H1 (cell line): ENCODE measurements at regions of chr7 and their contacts with region 1.

Region 1: GRCh38 chr7:124784879-124785818 is 19.6 kb upstream of the GPR37 start:
- DNase-seq: peak in 1 of 2 experiments; percentile 39
- H3K4me3 ChIP-seq: no peak overlapping the region
- H3K27ac ChIP-seq: no peak overlapping the region
- H3K4me1 ChIP-seq: peaks cover 0 to 8% (median 3%) of the 10 kb centered on the region in 4 experiments; a peak in 5 of 7 replicates
- H3K27me3 ChIP-seq: no peaks in the 10 kb centered on the region
- CTCF ChIP-seq: peak; percentile 44 to 88 (median 83)
- EP300 ChIP-seq: no peak
- POLR2A ChIP-seq: no peak
- RAD21 ChIP-seq: peak; percentile 98 to 100

Region 2: GRCh38 chr7:124765401-124766352 is 19.5 kb before region 1 on chr7 and contains the start of gene GPR37:
- CTCF ChIA-PET with region 1: interaction called, 14 read pairs
- POLR2A ChIA-PET with region 1: no interaction called
- DNase-seq: peak; percentile 59 to 85
- H3K4me3 ChIP-seq: peak within 1 kb of the TSS; percentile 66 to 86 (median 76)
- H3K27ac ChIP-seq: no peak within 1 kb of the TSS
- H3K4me1 ChIP-seq: peaks cover 5 to 9% (median 6%) of the 10 kb centered on the region in 4 experiments; a peak in 6 of 7 replicates
- H3K27me3 ChIP-seq: peaks cover 5 to 24% (median 18%) of the 10 kb centered on the region in 4 experiments; a peak in 6 of 7 replicates
- CTCF ChIP-seq: peak in 2 of 3 experiments; percentile 1 to 9; a peak in 1 of 4 replicates
- EP300 ChIP-seq: no peak
- POLR2A ChIP-seq: no peak
- RAD21 ChIP-seq: peak; percentile 35 to 43
- total RNA-seq, gene GPR37: 15.5 and 17.4 TPM in 2 replicates

Region 3: GRCh38 chr7:124800386-124800785 is 15.2 kb after region 1 on chr7:
- CTCF ChIA-PET with region 1: interaction called, 12 read pairs
- POLR2A ChIA-PET with region 1: no interaction called
- DNase-seq: no peak
- H3K4me3 ChIP-seq: no peak overlapping the region
- H3K27ac ChIP-seq: no peak overlapping the region
- H3K4me1 ChIP-seq: peaks cover 0 to 2% (median 0%) of the 10 kb centered on the region in 4 experiments; a peak in 1 of 7 replicates
- H3K27me3 ChIP-seq: no peaks in the 10 kb centered on the region
- CTCF ChIP-seq: no peak
- EP300 ChIP-seq: no peak
- POLR2A ChIP-seq: no peak
- RAD21 ChIP-seq: no peak

Region 4: DNA sequence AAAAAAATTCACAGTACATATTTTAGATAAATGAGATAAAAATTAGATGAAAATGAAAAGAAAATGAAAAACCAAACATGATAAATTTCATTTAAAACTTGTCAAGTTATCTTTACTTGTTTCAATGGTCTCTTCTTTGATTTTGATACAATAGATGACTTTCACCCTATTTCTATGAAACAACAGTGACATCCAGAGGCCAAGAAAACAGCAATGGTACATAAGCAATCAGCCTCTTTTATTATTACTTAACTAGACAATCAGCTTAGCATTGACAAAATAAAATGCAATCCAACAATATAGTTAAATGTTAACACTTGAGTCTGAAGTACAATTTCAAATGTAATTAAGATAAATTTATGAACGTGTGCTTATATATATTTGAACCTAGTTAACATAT is 55.3 kb after region 1 on chr7:
- CTCF ChIA-PET with region 1: no interaction called
- POLR2A ChIA-PET with region 1: no interaction called
- DNase-seq: no peak
- H3K4me3 ChIP-seq: no peak overlapping the region
- H3K27ac ChIP-seq: no peak overlapping the region
- H3K4me1 ChIP-seq: peaks cover 0 to 5% (median 0%) of the 10 kb centered on the region in 4 experiments; a peak in 1 of 7 replicates
- H3K27me3 ChIP-seq: no peaks in the 10 kb centered on the region
- CTCF ChIP-seq: peak in 1 of 3 experiments; percentile 35; a peak in 2 of 4 replicates
- EP300 ChIP-seq: no peak
- POLR2A ChIP-seq: no peak
- RAD21 ChIP-seq: peak; percentile 50 to 61